CD8-positive, alpha-beta memory T cell (primary cell): ENCODE measurements at regions of chr5 and their contacts with region 1.

Region 1: DNA sequence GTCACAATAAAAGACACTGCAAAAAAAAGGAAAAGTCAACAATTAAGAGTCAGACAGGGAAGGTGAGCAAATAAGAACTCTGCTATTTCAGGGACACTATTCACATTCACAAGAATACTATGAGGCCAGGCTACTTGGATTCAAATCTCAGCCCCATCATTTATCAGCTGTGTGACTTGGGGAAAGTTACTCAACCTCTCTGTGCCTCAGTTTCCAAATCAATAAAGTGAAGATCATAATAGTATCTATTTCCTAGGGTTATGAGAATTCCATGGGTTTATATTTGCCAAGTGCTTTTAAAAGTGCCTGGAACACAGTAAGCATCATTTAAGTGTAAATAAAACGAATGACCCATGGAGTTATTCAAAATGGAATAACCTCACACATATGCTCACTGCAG is 56.4 kb downstream of the ALDH7A1 start:
- DNase-seq: no peak
- H3K4me3 ChIP-seq: no peak overlapping the region
- H3K4me3 Mint-ChIP-seq: no peak overlapping the region
- H3K27ac ChIP-seq: no peak overlapping the region
- H3K27ac Mint-ChIP-seq: peak overlapping the region in 1 of 8 donors; percentile 15
- H3K4me1 ChIP-seq: no peaks in the 10 kb centered on the region
- H3K4me1 Mint-ChIP-seq: no peaks in the 10 kb centered on the region
- H3K27me3 ChIP-seq: no peaks in the 10 kb centered on the region
- H3K27me3 Mint-ChIP-seq: peaks cover 0 to 4% of the 10 kb centered on the region in 2 donors

Region 2: GRCh38 chr5:126354012-126354857 is 184.3 kb before region 1 on chr5:
- CTCF ChIA-PET with region 1: interaction called, 28 read pairs
- POLR2A ChIA-PET with region 1: no interaction called
- DNase-seq: peak in 2 of 5 donors; percentile 30 to 57
- H3K4me3 ChIP-seq: no peak overlapping the region
- H3K4me3 Mint-ChIP-seq: peak overlapping the region in 4 of 7 donors; percentile 37 to 70 (median 52)
- H3K27ac ChIP-seq: no peak overlapping the region
- H3K27ac Mint-ChIP-seq: peak overlapping the region in 5 of 8 donors; percentile 1 to 77 (median 32)
- H3K4me1 ChIP-seq: peaks cover 12% of the 10 kb centered on the region
- H3K4me1 Mint-ChIP-seq: peaks cover 4 to 15% (median 11%) of the 10 kb centered on the region in 3 donors
- H3K27me3 ChIP-seq: no peaks in the 10 kb centered on the region
- H3K27me3 Mint-ChIP-seq: peaks cover 0 to 18% of the 10 kb centered on the region in 2 donors